Activated B cell treated with CpG ODN at 0.5 μM for 24 hours (primary cell): ENCODE measurements at regions of chrX and their contacts with region 1.

Region 1: DNA sequence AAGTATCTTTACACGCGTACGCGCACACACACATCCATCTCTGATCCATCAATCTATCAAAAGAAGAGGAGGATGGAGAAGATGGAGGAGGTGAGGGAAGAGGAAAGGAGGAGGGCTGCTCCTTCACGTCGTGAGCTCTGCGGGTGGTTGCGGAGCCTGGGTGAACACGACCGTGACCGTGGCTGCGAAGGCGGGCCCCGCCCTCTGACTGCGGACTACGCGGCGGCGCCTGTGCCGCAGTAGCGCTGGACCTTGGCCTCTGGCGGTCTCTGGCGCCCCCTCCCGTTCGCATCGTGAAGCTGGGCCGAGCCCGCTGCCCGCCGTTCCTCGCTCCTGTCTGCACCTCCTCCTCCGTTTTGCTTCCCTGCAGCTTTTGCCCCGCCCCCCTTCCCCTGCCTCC is 37.7 kb upstream of the ARAF start:
- DNase-seq: peak; percentile 78
- ATAC-seq: peak; percentile 99
- H3K4me3 Mint-ChIP-seq: peak overlapping the region; percentile 73
- H3K27ac Mint-ChIP-seq: peak overlapping the region; percentile 46
- H3K4me1 Mint-ChIP-seq: peaks cover 3% of the 10 kb centered on the region
- H3K27me3 Mint-ChIP-seq: no peaks in the 10 kb centered on the region
- CTCF ChIP-seq: no peak

Region 2: GRCh38 chrX:46903458-46904242 is 619.6 kb before region 1 on chrX:
- CTCF ChIA-PET with region 1: interaction called, 5 read pairs
- POLR2A ChIA-PET with region 1: no interaction called
- intact Hi-C with region 1: loop called (anchors 5 kb)
- DNase-seq: peak; percentile 54
- ATAC-seq: peak; percentile 99
- H3K4me3 Mint-ChIP-seq: peak overlapping the region; percentile 73
- H3K27ac Mint-ChIP-seq: peak overlapping the region; percentile 35
- H3K4me1 Mint-ChIP-seq: peaks cover 5% of the 10 kb centered on the region
- H3K27me3 Mint-ChIP-seq: no peaks in the 10 kb centered on the region
- CTCF ChIP-seq: no peak

Region 3: DNA sequence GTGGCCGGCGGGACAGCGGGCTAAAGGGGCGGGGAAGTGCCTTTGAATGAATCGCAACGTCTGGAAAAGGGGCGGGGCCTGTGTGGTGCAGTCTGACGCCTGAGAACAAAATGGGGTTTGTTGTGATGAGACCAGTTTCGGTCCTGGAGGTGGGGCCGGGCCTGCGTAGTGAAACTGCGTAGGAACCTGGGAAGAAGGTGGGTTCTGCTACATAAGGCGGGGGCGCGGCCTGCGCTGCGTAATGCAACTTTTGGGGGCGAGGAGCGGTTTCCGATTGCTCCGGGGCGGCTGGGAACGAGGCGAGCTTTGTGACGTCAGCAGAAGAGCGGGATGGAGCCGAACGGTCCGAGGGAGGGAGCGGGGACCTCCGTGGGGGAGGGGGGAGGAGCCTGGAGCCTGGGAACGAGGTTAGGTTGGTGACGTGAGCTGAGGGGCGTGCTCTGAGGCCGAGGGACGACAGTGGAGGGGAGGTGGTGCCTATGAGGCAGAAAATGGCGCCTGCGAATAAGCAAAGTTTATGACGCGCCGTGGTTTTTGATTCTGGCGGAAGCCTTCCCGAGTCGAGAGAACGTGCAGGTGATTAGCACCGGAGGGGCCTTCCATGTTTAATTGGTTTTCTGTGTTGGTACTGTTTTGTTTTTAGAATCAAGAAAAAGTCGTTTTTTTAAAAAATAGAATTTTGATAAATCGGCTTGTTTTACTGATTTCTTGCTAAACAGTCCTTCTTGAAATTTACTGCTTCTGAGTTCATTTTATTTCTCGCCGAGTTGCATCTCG is 289.8 kb before region 1 on chrX:
- CTCF ChIA-PET with region 1: no interaction called
- POLR2A ChIA-PET with region 1: interaction called, 9 read pairs
- intact Hi-C with region 1: loop called (anchors 1 kb)
- DNase-seq: peak; percentile 74
- ATAC-seq: peak; percentile 90
- H3K4me3 Mint-ChIP-seq: peak overlapping the region; percentile 92
- H3K27ac Mint-ChIP-seq: peak overlapping the region; percentile 98
- H3K4me1 Mint-ChIP-seq: peaks cover 15% of the 10 kb centered on the region
- H3K27me3 Mint-ChIP-seq: no peaks in the 10 kb centered on the region
- CTCF ChIP-seq: no peak

Region 4: GRCh38 chrX:47384502-47384901 is 138.8 kb before region 1 on chrX:
- CTCF ChIA-PET with region 1: interaction called, 8 read pairs
- POLR2A ChIA-PET with region 1: interaction called, 5 read pairs
- intact Hi-C with region 1: loop called (anchors 1 kb)
- DNase-seq: no peak
- ATAC-seq: peak; percentile 72
- H3K4me3 Mint-ChIP-seq: no peak overlapping the region
- H3K27ac Mint-ChIP-seq: no peak overlapping the region
- H3K4me1 Mint-ChIP-seq: peaks cover 7% of the 10 kb centered on the region
- H3K27me3 Mint-ChIP-seq: no peaks in the 10 kb centered on the region
- CTCF ChIP-seq: peak; percentile 33

Region 5: GRCh38 chrX:47482512-47483309 is 40.6 kb before region 1 on chrX and contains the start of gene ZNF41:
- CTCF ChIA-PET with region 1: interaction called, 3 read pairs
- POLR2A ChIA-PET with region 1: interaction called, 6 read pairs
- intact Hi-C with region 1: loop called (anchors 2 kb)
- DNase-seq: peak; percentile 63
- ATAC-seq: peak; percentile 78
- H3K4me3 Mint-ChIP-seq: peak within 1 kb of the TSS; percentile 90
- H3K27ac Mint-ChIP-seq: peak within 1 kb of the TSS; percentile 92
- H3K4me1 Mint-ChIP-seq: peaks cover 42% of the 10 kb centered on the region
- H3K27me3 Mint-ChIP-seq: no peaks in the 10 kb centered on the region
- CTCF ChIP-seq: no peak
- total RNA-seq, gene ZNF41: 15.4 and 19.2 TPM in 2 replicates

Region 6: GRCh38 chrX:47497273-47497672 is 26.0 kb before region 1 on chrX:
- CTCF ChIA-PET with region 1: interaction called, 28 read pairs
- POLR2A ChIA-PET with region 1: interaction called, 4 read pairs
- intact Hi-C with region 1: loop called (anchors 1 kb)
- DNase-seq: no peak
- ATAC-seq: no peak
- H3K4me3 Mint-ChIP-seq: no peak overlapping the region
- H3K27ac Mint-ChIP-seq: no peak overlapping the region
- H3K4me1 Mint-ChIP-seq: peaks cover 13% of the 10 kb centered on the region
- H3K27me3 Mint-ChIP-seq: no peaks in the 10 kb centered on the region
- CTCF ChIP-seq: no peak